Common myeloid progenitor, CD34-positive (primary cell): ENCODE measurements at regions of chr2 and their contacts with region 1.

Region 1: DNA sequence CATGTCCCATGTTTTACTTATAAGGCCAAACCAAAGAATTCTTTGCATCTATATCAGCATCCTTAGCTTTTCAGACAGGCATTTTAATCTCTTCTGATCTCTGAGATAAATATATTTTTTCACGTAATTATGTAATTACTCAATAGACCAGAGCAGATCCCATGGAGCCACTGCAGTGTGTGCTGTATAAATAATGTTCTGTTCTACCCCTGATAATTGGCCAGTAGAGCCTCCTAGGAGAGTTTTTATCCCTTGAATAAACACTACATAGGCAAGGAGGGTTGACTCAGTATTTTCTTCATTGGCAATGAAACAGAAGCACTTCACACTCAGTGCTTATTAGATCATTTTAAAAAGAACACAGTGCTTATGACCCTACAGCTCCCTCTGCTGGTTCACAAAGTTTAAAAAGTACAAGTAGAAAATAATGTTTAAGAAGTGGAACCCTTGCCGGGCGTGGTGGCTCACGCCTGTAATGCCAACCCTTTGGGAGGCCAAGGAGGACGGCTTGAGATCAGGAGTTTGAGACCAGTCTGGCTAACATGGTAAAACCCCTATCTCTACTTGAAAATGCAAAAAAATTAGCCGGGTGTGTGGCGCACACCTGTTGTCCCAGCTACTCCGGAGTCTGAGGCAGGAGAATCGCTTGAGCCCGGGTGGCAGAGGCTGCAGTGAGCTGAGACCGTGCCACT is 91.9 kb downstream of the PPP1R1C start:
- DNase-seq: peak; percentile 71 to 84 (median 77)
- H3K4me3 ChIP-seq: no peak overlapping the region
- H3K27ac ChIP-seq: no peak overlapping the region
- H3K4me1 ChIP-seq: peaks cover 0 to 9% (median 1%) of the 10 kb centered on the region in 4 experiments
- H3K27me3 ChIP-seq: no peaks in the 10 kb centered on the region

Region 2: GRCh38 chr2:181738074-181738473 is 339.5 kb before region 1 on chr2:
- CTCF ChIA-PET with region 1: interaction called, 17 read pairs
- POLR2A ChIA-PET with region 1: no interaction called
- DNase-seq: peak; percentile 29 to 67 (median 60)
- H3K4me3 ChIP-seq: no peak overlapping the region
- H3K27ac ChIP-seq: no peak overlapping the region
- H3K4me1 ChIP-seq: no peaks in the 10 kb centered on the region
- H3K27me3 ChIP-seq: no peaks in the 10 kb centered on the region

Region 3: DNA sequence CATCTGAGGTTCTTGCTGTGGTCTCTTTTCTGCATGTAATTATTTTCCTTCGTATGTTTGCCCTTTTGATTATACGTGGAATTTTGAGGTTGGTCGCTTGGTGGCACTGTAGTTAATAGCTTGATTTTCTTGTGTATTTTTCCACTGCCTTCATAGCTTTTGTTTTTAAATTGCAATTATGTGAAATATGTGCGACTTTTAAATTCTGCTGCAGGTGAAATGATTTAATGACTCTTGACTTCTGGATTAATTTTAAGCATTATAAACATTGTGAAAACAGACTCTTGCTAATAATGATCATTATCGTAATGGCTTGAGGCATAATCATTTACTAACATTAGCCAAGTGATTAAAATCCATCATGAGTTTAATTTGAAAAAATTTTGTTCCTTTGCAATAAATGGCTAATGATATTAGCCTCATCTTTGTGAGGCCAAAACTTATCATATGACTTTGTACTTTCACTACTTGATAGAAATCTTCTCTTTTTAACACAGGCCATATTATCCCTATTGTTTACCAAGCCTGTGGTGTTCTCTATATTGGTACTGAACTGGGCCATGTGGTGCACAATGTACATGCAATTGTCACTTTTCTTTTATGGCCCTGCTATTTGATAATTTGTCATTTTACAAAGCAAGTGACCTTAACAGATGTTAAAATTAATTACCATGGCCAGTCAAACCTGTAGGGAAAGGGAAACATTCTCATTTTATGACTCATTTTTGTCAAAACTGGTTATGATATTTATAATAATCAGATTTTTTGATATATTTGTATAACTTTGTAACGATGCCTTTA is 334.5 kb before region 1 on chr2:
- CTCF ChIA-PET with region 1: interaction called, 17 read pairs
- POLR2A ChIA-PET with region 1: no interaction called
- DNase-seq: peak; percentile 65 to 85 (median 79)
- H3K4me3 ChIP-seq: no peak overlapping the region
- H3K27ac ChIP-seq: no peak overlapping the region
- H3K4me1 ChIP-seq: no peaks in the 10 kb centered on the region
- H3K27me3 ChIP-seq: no peaks in the 10 kb centered on the region

Region 4: DNA sequence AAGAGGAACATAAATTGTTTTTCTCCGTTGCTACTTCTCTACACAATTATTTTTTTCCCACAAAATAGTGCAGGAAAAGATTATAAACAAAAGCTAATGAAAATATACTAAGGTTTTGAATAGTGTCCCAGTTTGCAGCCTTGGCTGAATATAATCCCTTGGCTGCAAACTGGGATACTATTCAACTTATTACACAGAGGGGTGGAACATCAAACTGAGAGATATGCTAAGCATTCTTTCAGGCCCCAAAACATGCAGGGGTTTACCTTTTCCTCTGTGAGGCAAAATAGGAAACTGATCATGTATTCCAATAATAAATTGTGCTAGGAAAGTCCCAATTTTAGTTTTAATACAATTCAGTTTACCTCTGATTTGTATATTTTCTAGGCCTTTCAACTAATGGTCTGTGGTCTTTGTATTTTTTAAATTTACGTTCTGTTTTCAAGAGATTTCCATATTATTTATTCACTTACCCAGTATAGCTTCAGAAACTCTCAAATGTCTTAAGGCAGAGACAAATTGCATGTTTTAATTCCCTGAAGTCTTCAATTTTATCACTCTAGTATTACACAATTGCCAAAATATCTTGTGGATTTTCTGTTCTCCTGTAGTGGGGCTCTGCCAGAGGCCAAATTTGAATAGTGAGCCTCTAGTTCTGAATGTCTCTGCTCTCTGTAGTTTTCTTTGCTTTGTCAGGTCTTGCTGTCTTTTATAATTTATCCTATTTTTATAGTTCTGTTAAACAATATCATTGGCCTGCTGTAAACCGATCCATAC is 28.0 kb before region 1 on chr2:
- CTCF ChIA-PET with region 1: no interaction called
- POLR2A ChIA-PET with region 1: no interaction called
- DNase-seq: no peak
- H3K4me3 ChIP-seq: no peak overlapping the region
- H3K27ac ChIP-seq: no peak overlapping the region
- H3K4me1 ChIP-seq: no peaks in the 10 kb centered on the region
- H3K27me3 ChIP-seq: no peaks in the 10 kb centered on the region